Endothelial cell of umbilical vein (primary cell): ENCODE measurements at regions of chr15 and their contacts with region 1.

Region 1: GRCh38 chr15:23642413-23643044 is 5.1 kb downstream of the MAGEL2 start:
- DNase-seq: peak; percentile 37
- H3K4me3 ChIP-seq: no peak overlapping the region
- H3K27ac ChIP-seq: no peak overlapping the region
- H3K4me1 ChIP-seq: no peaks in the 10 kb centered on the region
- H3K27me3 ChIP-seq: no peaks in the 10 kb centered on the region
- CTCF ChIP-seq: peak; percentile 55 to 60
- POLR2A ChIP-seq: no peak

Region 2: DNA sequence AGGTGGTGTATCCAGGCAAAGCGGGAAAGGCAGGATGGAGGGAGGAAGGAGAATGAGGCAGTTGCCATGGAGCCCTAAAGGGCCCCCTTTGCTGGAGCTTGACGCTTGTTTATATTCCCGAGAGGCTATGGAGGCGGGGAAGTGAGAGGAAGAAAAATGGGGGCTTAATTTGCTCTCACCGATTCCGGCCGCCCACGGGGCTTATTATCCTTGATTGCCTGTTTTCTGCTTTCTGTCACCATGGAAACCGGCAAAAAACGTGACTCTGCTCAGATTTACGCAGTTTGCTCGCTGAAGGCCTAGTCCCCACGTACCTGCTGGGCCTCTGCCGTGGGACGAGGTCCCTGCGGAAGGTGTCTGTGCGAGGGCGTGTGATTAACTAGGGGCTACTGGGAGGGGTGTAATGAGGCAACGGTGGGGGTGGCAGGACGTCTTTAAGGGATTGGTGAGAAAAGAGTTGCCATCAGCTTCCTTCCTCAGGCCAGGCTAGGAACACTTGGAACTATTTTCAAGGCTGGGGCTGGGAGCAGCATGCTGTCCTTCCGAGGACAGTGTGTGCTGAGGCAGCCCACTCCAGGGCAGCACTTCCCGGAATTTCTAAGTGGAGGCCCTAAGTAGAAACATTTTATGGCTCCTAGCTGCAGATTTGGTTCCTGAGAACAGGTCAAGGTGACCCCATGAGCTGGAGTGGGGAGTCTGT is 155.4 kb after region 1 on chr15:
- CTCF ChIA-PET with region 1: no interaction called
- POLR2A ChIA-PET with region 1: no interaction called
- dilution Hi-C with region 1: no loop called
- intact Hi-C with region 1: no loop called
- DNase-seq: no peak
- H3K4me3 ChIP-seq: no peak overlapping the region
- H3K27ac ChIP-seq: no peak overlapping the region
- H3K4me1 ChIP-seq: no peaks in the 10 kb centered on the region
- H3K27me3 ChIP-seq: no peaks in the 10 kb centered on the region
- CTCF ChIP-seq: no peak
- POLR2A ChIP-seq: no peak

Region 3: GRCh38 chr15:23866832-23867231 is 224.3 kb after region 1 on chr15:
- CTCF ChIA-PET with region 1: no interaction called
- POLR2A ChIA-PET with region 1: no interaction called
- dilution Hi-C with region 1: no loop called
- intact Hi-C with region 1: loop called (anchors 5 kb)
- DNase-seq: no peak
- H3K4me3 ChIP-seq: no peak overlapping the region
- H3K27ac ChIP-seq: no peak overlapping the region
- H3K4me1 ChIP-seq: no peaks in the 10 kb centered on the region
- H3K27me3 ChIP-seq: no peaks in the 10 kb centered on the region
- CTCF ChIP-seq: no peak
- POLR2A ChIP-seq: no peak

Region 4: GRCh38 chr15:23998056-23998455 is 355.5 kb after region 1 on chr15:
- CTCF ChIA-PET with region 1: no interaction called
- POLR2A ChIA-PET with region 1: no interaction called
- dilution Hi-C with region 1: no loop called
- intact Hi-C with region 1: no loop called
- DNase-seq: no peak
- H3K4me3 ChIP-seq: no peak overlapping the region
- H3K27ac ChIP-seq: no peak overlapping the region
- H3K4me1 ChIP-seq: no peaks in the 10 kb centered on the region
- H3K27me3 ChIP-seq: no peaks in the 10 kb centered on the region
- CTCF ChIP-seq: no peak
- POLR2A ChIP-seq: no peak

Region 5: GRCh38 chr15:25268166-25268565 is 1625.6 kb after region 1 on chr15:
- CTCF ChIA-PET with region 1: no interaction called
- POLR2A ChIA-PET with region 1: no interaction called
- dilution Hi-C with region 1: no loop called
- intact Hi-C with region 1: loop called (anchors 10 kb)
- DNase-seq: no peak
- H3K4me3 ChIP-seq: no peak overlapping the region
- H3K27ac ChIP-seq: no peak overlapping the region
- H3K4me1 ChIP-seq: no peaks in the 10 kb centered on the region
- H3K27me3 ChIP-seq: no peaks in the 10 kb centered on the region
- CTCF ChIP-seq: no peak
- POLR2A ChIP-seq: no peak

Region 6: DNA sequence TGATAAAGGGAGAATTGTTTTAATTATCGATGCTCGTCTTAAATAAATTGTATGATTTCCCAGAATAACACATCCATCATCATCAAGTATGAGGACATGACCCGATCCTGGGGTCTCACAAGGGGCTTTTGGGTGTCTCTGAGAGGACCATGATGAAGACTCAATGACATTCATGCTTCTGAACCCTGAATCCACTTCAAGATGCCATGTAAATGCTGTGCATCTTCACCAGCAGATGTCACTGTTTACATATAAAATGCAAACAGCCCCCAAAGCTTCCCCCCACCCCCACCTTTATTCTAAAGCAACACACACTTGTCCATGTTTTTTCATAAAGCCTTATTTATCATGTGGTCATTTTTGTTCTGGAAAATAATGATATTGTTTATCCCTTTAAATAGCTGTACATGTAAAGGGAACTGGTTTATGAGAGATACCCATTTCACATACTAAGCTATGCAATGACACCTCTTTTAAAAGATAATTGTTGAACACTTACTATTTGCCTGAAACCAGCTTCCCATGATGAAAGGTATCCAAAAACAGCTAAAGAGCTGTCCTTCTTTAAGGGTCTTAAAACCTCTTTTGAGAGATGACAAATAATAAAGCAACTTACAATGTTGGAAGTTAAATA is 1866.0 kb after region 1 on chr15:
- CTCF ChIA-PET with region 1: no interaction called
- POLR2A ChIA-PET with region 1: no interaction called
- dilution Hi-C with region 1: no loop called
- intact Hi-C with region 1: loop called (anchors 10 kb)
- DNase-seq: no peak
- H3K4me3 ChIP-seq: no peak overlapping the region
- H3K27ac ChIP-seq: no peak overlapping the region
- H3K4me1 ChIP-seq: no peaks in the 10 kb centered on the region
- H3K27me3 ChIP-seq: no peaks in the 10 kb centered on the region
- CTCF ChIP-seq: peak in 1 of 2 donors; percentile 25
- POLR2A ChIP-seq: no peak